Activated CD4-positive, alpha-beta T cell treated with anti-CD3 and anti-CD28 coated beads, Interleukin-2, amount 10 ng/mL, durations not matched to agents 7 days and 5 days (primary cell): ENCODE measurements at regions of chr3 and their contacts with region 1.

Region 1: GRCh38 chr3:141386611-141387111 is 18.4 kb downstream of the ZBTB38 start:
- DNase-seq: no peak
- H3K4me3 Mint-ChIP-seq: peak overlapping the region; percentile 36
- H3K27ac Mint-ChIP-seq: peak overlapping the region; percentile 79
- H3K4me1 Mint-ChIP-seq: peaks cover 13% of the 10 kb centered on the region
- H3K27me3 Mint-ChIP-seq: peaks cover 12% of the 10 kb centered on the region

Region 2: GRCh38 chr3:141353652-141354495 is 32.8 kb before region 1 on chr3:
- CTCF ChIA-PET with region 1: no interaction called
- POLR2A ChIA-PET with region 1: no interaction called
- DNase-seq: no peak
- H3K4me3 Mint-ChIP-seq: no peak overlapping the region
- H3K27ac Mint-ChIP-seq: no peak overlapping the region
- H3K4me1 Mint-ChIP-seq: no peaks in the 10 kb centered on the region
- H3K27me3 Mint-ChIP-seq: peaks cover 15% of the 10 kb centered on the region

Region 3: DNA sequence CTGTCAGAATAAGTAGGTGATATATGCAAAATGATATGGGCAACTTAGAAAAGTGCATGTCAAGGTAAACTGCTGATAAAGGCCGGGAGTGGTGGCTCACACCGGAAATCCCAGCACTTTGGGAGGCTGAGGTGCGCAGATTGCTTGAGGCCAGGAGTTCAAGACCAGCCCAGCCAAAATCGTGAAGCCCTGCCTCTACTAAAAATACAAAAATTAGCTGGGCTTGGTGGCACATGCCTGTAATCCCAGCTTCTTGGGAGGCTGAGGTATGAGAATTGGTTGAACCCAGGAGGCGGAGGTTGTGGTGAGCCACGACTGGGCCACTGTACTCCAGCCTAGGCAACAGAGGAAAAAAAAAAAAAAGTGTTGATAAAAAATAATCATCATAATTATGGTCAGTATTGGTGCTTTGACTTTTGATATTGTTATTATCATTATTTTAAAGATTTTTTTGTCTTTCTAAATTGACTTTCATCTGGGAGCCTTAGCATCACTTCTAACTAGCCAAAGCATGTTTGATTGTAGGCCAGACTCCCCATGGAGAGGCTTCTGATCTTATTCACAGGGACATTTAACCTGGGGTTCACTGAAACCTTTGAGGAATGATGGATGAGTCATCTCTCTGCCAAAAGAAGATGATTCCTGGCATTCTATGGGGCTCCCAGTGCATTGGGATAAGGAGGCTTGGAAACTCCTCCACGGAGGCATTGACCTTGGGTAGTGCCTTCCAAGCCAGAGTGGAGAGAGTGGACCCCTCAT is 12.7 kb before region 1 on chr3:
- CTCF ChIA-PET with region 1: interaction called, 32 read pairs
- POLR2A ChIA-PET with region 1: interaction called, 3 read pairs
- DNase-seq: no peak
- H3K4me3 Mint-ChIP-seq: no peak overlapping the region
- H3K27ac Mint-ChIP-seq: no peak overlapping the region
- H3K4me1 Mint-ChIP-seq: peaks cover 40% of the 10 kb centered on the region
- H3K27me3 Mint-ChIP-seq: no peaks in the 10 kb centered on the region

Region 4: GRCh38 chr3:141412087-141412935 is 25.6 kb after region 1 on chr3:
- CTCF ChIA-PET with region 1: interaction called, 12 read pairs
- POLR2A ChIA-PET with region 1: no interaction called
- DNase-seq: peak; percentile 75
- H3K4me3 Mint-ChIP-seq: peak overlapping the region; percentile 69
- H3K27ac Mint-ChIP-seq: peak overlapping the region; percentile 100
- H3K4me1 Mint-ChIP-seq: peaks cover 67% of the 10 kb centered on the region
- H3K27me3 Mint-ChIP-seq: no peaks in the 10 kb centered on the region